Ovary (tissue), 10 donors: ENCODE measurements at regions of chrX and their contacts with region 1.

Region 1: GRCh38 chrX:129925305-129926092 is 19.5 kb downstream of the UTP14A start:
- DNase-seq: peak; percentile 57 to 79 (median 65)
- H3K4me3 ChIP-seq: no peak overlapping the region
- H3K27ac ChIP-seq: no peak overlapping the region
- H3K4me1 ChIP-seq: no peaks in the 10 kb centered on the region
- H3K27me3 ChIP-seq: no peaks in the 10 kb centered on the region
- CTCF ChIP-seq: peak; percentile 45 to 57 (median 51)
- EP300 ChIP-seq: no peak
- POLR2A ChIP-seq: no peak

Region 2: DNA sequence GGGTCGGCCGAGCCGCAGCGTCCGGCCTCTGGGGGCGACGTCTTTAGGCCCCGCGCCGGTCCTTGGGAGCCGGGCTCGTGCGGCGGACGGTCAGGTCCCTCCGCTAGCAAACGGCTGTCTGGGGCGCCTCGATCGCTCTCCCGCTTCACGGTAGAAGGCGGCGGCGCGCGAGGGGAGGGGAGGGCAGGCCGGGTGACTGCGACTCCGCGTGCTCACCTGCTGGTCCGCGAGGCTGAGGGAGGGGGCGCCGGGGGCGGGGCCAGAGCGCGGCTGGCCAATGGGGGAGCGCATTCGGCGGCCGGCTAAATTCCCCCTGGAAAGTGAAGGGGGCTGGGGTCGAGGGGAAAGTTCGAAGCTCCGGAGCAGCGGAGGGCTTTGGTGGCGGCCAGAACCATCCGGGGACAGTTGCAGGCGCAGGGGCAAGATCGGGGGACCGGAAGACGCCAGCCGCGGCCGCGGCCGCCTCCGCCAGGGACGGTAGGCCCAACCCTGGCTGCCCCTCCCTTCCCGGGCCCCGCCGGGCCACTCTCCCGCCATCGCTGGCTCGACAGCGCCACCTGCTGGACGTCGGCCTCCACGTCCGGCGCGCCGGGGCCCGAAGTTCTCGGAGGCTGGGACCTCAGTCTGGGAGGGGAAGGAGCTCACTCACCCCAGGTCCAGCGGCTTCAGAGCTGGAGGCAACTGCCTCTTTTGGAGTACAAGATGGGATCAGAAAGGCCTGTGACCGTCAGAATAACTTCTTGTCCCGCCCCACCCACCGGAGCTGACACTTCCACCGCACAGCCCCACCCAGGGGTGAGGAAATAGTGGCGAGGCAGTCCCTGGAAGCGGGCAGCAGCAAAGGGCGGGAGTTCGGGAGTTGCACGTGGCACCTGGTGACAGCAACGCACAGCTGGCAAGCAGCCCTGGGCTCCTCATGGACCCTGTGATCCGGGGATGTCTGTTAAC is 134.9 kb after region 1 on chrX:
- intact Hi-C with region 1: loop called (anchors 5 to 10 kb)
- DNase-seq: peak; percentile 74 to 88 (median 84)
- H3K4me3 ChIP-seq: peak overlapping the region; percentile 33
- H3K27ac ChIP-seq: no peak overlapping the region
- H3K4me1 ChIP-seq: no peaks in the 10 kb centered on the region
- H3K27me3 ChIP-seq: no peaks in the 10 kb centered on the region
- CTCF ChIP-seq: peak; percentile 77 to 92 (median 86)
- EP300 ChIP-seq: no peak
- POLR2A ChIP-seq: no peak

Region 3: GRCh38 chrX:130196466-130196865 is 271.0 kb after region 1 on chrX:
- intact Hi-C with region 1: loop called in 1 of 4 experiments (anchors 10 kb)
- DNase-seq: no peak
- H3K4me3 ChIP-seq: no peak overlapping the region
- H3K27ac ChIP-seq: no peak overlapping the region
- H3K4me1 ChIP-seq: no peaks in the 10 kb centered on the region
- H3K27me3 ChIP-seq: no peaks in the 10 kb centered on the region
- CTCF ChIP-seq: no peak
- EP300 ChIP-seq: no peak
- POLR2A ChIP-seq: no peak